ENCODE measurements at regions of chrX and their contacts with region 1.

Region 1: DNA sequence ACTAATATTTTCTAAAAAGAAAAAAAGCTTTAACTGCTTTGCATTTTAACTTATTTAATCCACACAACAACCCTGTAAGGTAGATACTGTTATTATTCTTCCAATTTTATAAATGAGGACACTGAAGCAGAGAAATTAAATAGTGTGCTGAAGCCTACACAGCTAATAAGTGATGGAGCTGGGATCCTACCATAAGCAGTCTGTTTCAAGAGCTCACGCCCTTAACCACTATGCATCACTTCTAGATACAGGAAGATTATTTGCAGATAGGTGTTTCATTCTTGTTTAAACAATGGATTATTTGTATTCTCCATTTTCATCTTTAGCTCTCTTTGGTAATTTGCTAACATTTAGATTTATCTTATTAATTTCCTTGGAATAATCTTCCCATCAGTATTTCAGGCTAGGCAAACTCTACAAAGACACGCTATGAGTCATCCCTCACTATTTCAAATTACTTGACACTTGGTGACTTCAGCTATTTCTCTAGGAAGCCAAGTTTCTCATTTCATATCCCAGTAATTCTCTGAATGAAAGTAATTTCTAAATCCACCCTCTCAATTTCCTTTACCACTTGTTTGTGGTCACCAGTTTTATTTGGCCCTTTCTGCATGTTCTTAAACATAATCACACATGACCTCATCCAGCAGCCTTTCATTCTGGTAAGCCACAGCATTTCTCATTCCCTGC is 67.3 kb downstream of the ASB9 start:
- DNase-seq: no peak
- H3K4me3 Mint-ChIP-seq: no peak overlapping the region
- H3K27ac Mint-ChIP-seq: no peak overlapping the region
- H3K4me1 Mint-ChIP-seq: peaks cover 47% of the 10 kb centered on the region
- H3K27me3 Mint-ChIP-seq: no peaks in the 10 kb centered on the region

Region 2: DNA sequence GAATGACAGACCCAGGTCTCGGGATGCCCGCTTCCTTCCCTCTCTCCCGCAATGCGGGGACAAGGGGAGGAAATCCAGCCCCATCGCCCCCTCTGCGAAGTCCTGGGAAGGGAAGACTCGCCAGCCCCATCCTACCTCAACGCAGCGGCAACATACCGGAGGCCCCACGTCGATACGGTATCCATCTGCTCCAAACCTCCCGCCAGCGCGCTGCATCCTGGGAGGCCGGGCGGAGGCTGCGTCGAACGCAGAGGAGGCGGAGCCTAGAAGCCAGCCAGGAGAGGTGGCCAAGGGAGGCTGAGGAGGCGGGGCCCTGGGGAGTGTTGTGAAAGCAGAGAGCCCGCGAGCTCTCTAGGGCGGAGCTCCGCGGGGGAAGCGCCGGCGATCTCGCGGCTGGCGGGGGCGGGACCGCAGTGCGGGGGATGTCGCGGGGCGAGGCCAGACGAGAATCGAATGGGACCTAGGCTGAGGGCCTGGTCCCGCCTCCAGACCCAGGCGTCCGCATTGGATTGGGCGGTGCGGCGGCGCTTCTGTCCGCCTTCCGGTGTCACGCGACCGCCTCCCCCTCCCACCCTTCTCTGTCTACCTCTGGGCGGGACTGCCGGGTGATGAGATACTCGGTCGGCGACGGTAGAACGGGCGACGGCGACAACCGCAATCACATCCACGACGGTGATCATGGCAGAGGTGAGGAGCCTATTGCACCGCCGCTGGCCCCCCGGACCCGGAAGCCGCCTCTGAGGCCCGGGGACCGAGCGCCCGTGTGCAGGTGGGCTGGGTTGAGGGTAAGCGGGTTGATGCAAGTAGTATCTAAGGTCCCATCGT is 329.5 kb before region 1 on chrX and contains the starts of genes FANCB and MOSPD2:
- CTCF ChIA-PET with region 1: no interaction called
- POLR2A ChIA-PET with region 1: no interaction called
- intact Hi-C with region 1: loop called (anchors 2 kb)
- DNase-seq: peak; percentile 96
- H3K4me3 Mint-ChIP-seq: peak within 1 kb of the TSS; percentile 79
- H3K27ac Mint-ChIP-seq: peak within 1 kb of the TSS; percentile 80
- H3K4me1 Mint-ChIP-seq: peaks cover 15% of the 10 kb centered on the region
- H3K27me3 Mint-ChIP-seq: no peaks in the 10 kb centered on the region
- total RNA-seq, gene FANCB: 12.0 to 16.2 TPM
- total RNA-seq, gene MOSPD2: 12.6 to 13.7 TPM

Region 3: GRCh38 chrX:15043538-15043937 is 159.1 kb before region 1 on chrX:
- CTCF ChIA-PET with region 1: no interaction called
- POLR2A ChIA-PET with region 1: no interaction called
- intact Hi-C with region 1: loop called (anchors 5 kb)
- DNase-seq: no peak
- H3K4me3 Mint-ChIP-seq: no peak overlapping the region
- H3K27ac Mint-ChIP-seq: no peak overlapping the region
- H3K4me1 Mint-ChIP-seq: peaks cover 6% of the 10 kb centered on the region
- H3K27me3 Mint-ChIP-seq: peaks cover 1% of the 10 kb centered on the region

Region 4: DNA sequence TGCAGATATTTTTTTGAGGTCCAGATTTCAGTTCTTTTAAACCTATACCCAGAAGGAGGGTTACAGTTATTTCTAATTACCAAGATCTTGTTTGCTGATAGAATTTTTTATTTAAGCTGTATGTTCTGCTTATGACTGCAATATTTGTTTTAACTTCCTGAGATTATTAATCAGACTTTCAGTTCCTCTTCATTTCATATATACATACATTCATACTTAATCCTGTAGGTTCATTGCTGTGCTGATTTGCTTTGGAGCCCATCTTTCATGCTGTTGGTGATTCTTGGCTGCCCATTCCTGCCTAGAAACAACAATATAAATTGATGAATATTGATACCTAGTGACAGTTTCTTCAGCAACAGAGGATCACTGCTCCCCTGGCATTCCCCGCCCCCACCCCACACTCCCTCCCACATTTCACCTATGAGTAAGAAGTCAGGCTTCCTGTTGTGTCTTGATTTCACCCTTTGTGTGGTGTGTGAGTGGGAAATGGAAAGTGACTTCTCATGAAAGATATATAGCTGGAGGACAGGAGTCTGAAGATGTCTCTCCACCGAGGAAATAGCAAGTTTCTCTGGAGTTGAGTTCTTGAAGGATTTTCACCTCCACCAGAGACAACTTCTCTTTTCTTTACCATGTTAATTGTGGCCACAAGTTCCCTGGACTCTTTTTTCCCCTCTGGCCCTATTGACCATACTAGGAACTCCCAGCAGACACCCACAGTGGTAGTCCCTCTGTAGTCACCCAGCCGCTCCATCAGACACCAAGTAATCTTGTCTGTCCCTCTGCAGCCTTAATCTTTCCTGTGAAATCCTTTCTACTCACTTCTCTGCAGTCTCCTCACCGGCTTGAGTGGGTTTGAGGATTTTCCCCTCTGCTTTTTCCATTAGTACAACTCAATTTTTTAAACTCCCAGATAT is 51.1 kb before region 1 on chrX:
- CTCF ChIA-PET with region 1: no interaction called
- POLR2A ChIA-PET with region 1: interaction called, 3 read pairs
- intact Hi-C with region 1: loop called (anchors 1 kb)
- DNase-seq: peak; percentile 51
- H3K4me3 Mint-ChIP-seq: peak overlapping the region; percentile 33
- H3K27ac Mint-ChIP-seq: peak overlapping the region; percentile 57
- H3K4me1 Mint-ChIP-seq: peaks cover 22% of the 10 kb centered on the region
- H3K27me3 Mint-ChIP-seq: peaks cover 4% of the 10 kb centered on the region

Region 5: GRCh38 chrX:15242899-15243555 is 40.4 kb after region 1 on chrX:
- CTCF ChIA-PET with region 1: no interaction called
- POLR2A ChIA-PET with region 1: no interaction called
- intact Hi-C with region 1: loop called (anchors 2 kb)
- DNase-seq: peak; percentile 36
- H3K4me3 Mint-ChIP-seq: no peak overlapping the region
- H3K27ac Mint-ChIP-seq: no peak overlapping the region
- H3K4me1 Mint-ChIP-seq: peaks cover 8% of the 10 kb centered on the region
- H3K27me3 Mint-ChIP-seq: no peaks in the 10 kb centered on the region